GM12878 (cell line): ENCODE measurements at regions of chr16 and their contacts with region 1.

Region 1: DNA sequence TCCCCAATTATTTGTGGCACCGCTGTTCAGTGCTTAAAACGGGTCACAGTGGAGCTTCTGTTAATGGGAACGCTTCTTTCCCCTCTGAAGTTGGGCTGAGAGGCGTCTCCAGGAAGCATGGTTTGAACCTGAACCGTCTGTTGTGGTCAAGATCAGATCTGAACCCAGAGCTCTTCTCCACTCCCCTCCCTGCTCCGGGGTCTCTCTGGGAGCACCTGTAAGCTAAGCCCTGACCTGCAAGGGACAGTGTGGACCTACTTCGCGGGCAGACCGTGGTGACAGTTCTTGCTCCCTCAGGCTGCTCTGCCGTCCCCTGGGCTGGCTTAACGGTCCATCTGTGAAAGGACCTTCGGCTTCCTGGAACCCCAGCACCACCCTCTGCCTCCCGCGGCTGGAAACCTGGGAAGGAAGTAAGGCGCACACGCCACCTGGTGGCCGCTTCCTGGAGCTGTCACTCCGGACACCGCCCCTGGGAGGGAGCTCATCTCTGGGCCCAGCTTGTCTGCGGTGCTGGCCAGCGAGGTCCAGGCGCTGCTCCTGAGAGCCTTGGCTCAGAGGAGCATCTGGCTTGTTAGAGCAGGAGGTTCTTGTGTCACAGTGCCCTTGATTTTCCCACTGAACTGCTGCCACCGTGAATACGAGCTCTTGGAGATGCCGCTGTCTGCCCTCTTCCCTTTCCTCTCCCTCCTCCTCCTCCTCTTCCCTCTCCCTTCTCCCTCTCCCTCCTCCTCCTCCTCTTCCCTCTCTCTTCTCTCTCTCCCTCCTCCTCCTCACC is 518.5 kb upstream of the EEF2KMT start:
- DNase-seq: no peak
- ATAC-seq: peak; percentile 71
- H3K4me3 ChIP-seq: no peak overlapping the region
- H3K27ac ChIP-seq: no peak overlapping the region
- H3K4me1 ChIP-seq: no peaks in the 10 kb centered on the region
- H3K27me3 ChIP-seq: no peaks in the 10 kb centered on the region
- CTCF ChIP-seq: peak; percentile 51 to 63 (median 57)
- EP300 ChIP-seq: no peak
- POLR2A ChIP-seq: no peak
- RAD21 ChIP-seq: peak; percentile 43

Region 2: GRCh38 chr16:5234295-5235050 is 381.6 kb before region 1 on chr16:
- CTCF ChIA-PET with region 1: interaction called, 11 read pairs
- POLR2A ChIA-PET with region 1: no interaction called
- RAD21 ChIA-PET with region 1: interaction called, 8 read pairs
- SMC1A ChIA-PET with region 1: no interaction called
- in situ Hi-C with region 1: loop called (anchors 10 kb)
- intact Hi-C with region 1: loop called (anchors 10 kb)
- DNase-seq: no peak
- ATAC-seq: no peak
- H3K4me3 ChIP-seq: no peak overlapping the region
- H3K27ac ChIP-seq: no peak overlapping the region
- H3K4me1 ChIP-seq: no peaks in the 10 kb centered on the region
- H3K27me3 ChIP-seq: no peaks in the 10 kb centered on the region
- CTCF ChIP-seq: no peak
- EP300 ChIP-seq: no peak
- POLR2A ChIP-seq: no peak
- RAD21 ChIP-seq: no peak

Region 3: GRCh38 chr16:5502467-5502869 is 113.6 kb before region 1 on chr16:
- CTCF ChIA-PET with region 1: interaction called, 11 read pairs
- POLR2A ChIA-PET with region 1: no interaction called
- RAD21 ChIA-PET with region 1: no interaction called
- SMC1A ChIA-PET with region 1: interaction called, 3 read pairs
- in situ Hi-C with region 1: no loop called
- intact Hi-C with region 1: loop called (anchors 10 kb)
- DNase-seq: no peak
- ATAC-seq: no peak
- H3K4me3 ChIP-seq: no peak overlapping the region
- H3K27ac ChIP-seq: no peak overlapping the region
- H3K4me1 ChIP-seq: no peaks in the 10 kb centered on the region
- H3K27me3 ChIP-seq: no peaks in the 10 kb centered on the region
- CTCF ChIP-seq: peak in 2 of 3 experiments; percentile 23 to 41; a peak in 1 of 6 replicates
- EP300 ChIP-seq: no peak
- POLR2A ChIP-seq: no peak
- RAD21 ChIP-seq: peak; percentile 49

Region 4: DNA sequence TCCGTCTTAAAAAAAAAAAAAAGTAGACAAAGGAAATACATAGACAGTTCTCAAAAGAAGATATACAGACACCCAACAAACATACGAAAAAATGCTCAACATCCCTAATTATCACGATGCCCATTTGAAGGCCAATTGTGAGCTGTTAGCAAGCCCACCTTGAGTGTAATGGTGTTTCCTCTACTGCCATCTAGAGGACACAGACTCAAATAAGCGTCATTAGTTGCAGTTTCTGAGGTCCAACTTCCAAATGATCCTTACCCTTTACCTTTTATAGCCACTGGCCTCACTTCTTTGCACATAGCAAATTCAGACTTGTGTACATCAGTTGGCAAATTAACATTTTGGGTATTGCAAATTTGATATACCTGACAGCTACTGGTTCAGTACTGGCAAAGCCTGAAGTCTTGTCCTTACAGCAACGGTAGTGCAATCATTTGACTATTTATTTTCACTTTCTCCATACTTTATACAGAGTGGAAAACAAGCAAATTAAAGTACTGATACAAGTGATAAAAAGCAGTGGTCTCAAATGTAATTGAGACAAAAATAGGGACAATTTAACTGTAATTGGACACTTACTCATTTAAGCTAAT is 17.9 kb after region 1 on chr16:
- CTCF ChIA-PET with region 1: interaction called, 39 read pairs
- POLR2A ChIA-PET with region 1: no interaction called
- RAD21 ChIA-PET with region 1: no interaction called
- SMC1A ChIA-PET with region 1: interaction called, 6 read pairs
- in situ Hi-C with region 1: no loop called
- intact Hi-C with region 1: no loop called
- DNase-seq: no peak
- ATAC-seq: peak; percentile 36; the same call in 1 of the 3 replicates
- H3K4me3 ChIP-seq: no peak overlapping the region
- H3K27ac ChIP-seq: no peak overlapping the region
- H3K4me1 ChIP-seq: no peaks in the 10 kb centered on the region
- H3K27me3 ChIP-seq: no peaks in the 10 kb centered on the region
- CTCF ChIP-seq: peak in 2 of 3 experiments; percentile 43 to 46; a peak in 5 of 6 replicates
- EP300 ChIP-seq: no peak
- POLR2A ChIP-seq: no peak
- RAD21 ChIP-seq: 0 out of 2 replicates have a peak, but pooled peaks have one; percentile 22

Region 5: DNA sequence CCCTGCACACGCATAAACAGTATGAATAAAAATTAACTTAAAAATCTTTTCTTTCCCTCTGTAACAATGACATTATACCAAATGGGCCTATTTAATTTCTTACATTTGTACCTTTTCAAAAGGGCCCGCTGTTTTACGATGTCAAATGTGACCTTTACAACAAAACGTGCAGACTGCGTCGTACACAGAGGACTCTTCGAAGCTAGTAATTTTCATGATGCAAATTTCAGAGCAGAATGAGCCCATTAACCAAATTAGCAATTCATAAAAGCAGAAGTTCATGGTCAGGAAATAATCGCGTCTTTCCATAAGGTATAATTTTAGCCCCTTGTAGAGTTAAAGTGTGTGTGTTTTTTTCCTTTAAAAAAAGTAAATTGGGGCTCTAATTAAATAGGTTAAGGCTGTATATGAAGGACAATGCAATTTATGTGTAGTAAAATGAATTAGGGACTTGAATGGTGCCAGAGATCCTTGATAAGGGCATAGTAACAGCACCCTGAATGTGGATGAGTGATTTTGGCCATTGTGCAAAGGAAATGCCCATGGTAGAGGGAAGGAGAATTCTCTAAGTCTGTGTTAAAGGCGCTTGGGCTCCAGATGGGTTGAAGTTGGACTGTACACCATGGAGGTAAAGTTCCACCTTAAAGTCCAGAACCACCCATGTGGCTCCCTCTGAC is 27.9 kb after region 1 on chr16:
- CTCF ChIA-PET with region 1: no interaction called
- POLR2A ChIA-PET with region 1: no interaction called
- RAD21 ChIA-PET with region 1: no interaction called
- SMC1A ChIA-PET with region 1: no interaction called
- in situ Hi-C with region 1: no loop called
- intact Hi-C with region 1: no loop called
- DNase-seq: no peak
- ATAC-seq: no peak
- H3K4me3 ChIP-seq: no peak overlapping the region
- H3K27ac ChIP-seq: no peak overlapping the region
- H3K4me1 ChIP-seq: no peaks in the 10 kb centered on the region
- H3K27me3 ChIP-seq: no peaks in the 10 kb centered on the region
- CTCF ChIP-seq: no peak
- EP300 ChIP-seq: no peak
- POLR2A ChIP-seq: no peak
- RAD21 ChIP-seq: no peak

Region 6: DNA sequence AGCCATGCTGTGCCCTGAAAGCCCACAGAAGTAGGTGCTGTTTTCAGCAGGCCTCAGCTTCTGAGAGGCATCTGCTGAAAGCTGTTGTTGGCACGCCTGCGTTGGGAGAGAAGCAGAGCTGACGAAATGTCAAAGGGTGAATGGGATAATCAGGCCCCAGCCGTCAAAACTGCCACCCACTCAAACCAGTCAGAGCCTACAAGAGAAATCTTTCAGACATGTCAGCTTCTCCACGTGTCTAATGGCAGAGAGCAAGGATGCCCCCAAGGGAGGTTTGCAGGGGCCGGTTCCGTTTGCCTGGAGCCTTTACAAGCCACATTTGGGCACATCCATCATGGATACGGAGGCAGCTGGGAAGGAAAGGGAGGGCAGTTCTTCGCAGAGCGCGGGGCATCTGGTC is 49.8 kb after region 1 on chr16:
- CTCF ChIA-PET with region 1: no interaction called
- POLR2A ChIA-PET with region 1: no interaction called
- RAD21 ChIA-PET with region 1: no interaction called
- SMC1A ChIA-PET with region 1: no interaction called
- in situ Hi-C with region 1: no loop called
- intact Hi-C with region 1: no loop called
- DNase-seq: no peak
- ATAC-seq: no peak
- H3K4me3 ChIP-seq: no peak overlapping the region
- H3K27ac ChIP-seq: no peak overlapping the region
- H3K4me1 ChIP-seq: no peaks in the 10 kb centered on the region
- H3K27me3 ChIP-seq: no peaks in the 10 kb centered on the region
- CTCF ChIP-seq: no peak
- EP300 ChIP-seq: no peak
- POLR2A ChIP-seq: no peak
- RAD21 ChIP-seq: no peak